ENCODE measurements at regions of chr6 and their contacts with region 1.

Region 1: DNA sequence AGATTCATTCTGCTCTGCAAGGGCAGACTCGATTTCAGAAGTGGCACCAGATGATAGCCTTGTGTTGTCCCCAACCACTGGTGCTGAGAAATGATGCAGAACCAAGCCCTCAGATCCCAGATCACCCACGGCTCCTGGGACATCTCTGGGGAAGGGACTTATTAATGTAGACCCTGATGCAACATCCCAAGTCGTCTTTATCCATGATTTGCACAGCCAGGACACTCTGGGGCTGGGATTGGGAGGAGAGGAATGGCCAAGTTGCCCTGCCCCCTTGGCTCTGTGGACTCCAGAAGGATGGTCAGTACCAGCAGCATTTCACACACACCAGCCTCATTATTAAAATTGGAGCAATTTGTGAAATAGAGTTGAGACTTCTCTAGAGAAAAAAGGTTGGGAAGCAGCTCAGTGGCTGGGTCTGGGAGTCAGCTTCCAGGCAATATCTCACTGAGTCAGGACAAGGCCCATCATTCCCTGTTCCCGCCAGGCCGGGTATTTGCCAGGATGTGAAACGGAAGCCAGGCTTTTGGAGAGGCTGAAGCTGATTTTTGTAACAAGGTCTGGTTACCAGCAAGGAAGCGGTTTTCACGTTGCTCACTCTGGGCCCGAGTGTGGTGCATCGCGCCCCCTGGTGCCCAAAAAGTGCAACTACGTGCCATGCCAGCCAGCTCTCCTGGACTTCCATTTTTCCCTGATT is 67.4 kb downstream of the ZBTB2 start:
- DNase-seq: peak; percentile 36 to 83 (median 74)
- ATAC-seq: peak; percentile 80
- H3K4me3 ChIP-seq: no peak overlapping the region
- H3K4me3 Mint-ChIP-seq: peak overlapping the region; percentile 59
- H3K27ac ChIP-seq: no peak overlapping the region
- H3K27ac Mint-ChIP-seq: no peak overlapping the region
- H3K4me1 ChIP-seq: peaks cover 16% of the 10 kb centered on the region
- H3K4me1 Mint-ChIP-seq: peaks cover 21% of the 10 kb centered on the region
- H3K27me3 ChIP-seq: peaks cover 0 to 15% of the 10 kb centered on the region in 2 experiments
- H3K27me3 Mint-ChIP-seq: peaks cover 36% of the 10 kb centered on the region
- CTCF ChIP-seq: peak; percentile 96

Region 2: DNA sequence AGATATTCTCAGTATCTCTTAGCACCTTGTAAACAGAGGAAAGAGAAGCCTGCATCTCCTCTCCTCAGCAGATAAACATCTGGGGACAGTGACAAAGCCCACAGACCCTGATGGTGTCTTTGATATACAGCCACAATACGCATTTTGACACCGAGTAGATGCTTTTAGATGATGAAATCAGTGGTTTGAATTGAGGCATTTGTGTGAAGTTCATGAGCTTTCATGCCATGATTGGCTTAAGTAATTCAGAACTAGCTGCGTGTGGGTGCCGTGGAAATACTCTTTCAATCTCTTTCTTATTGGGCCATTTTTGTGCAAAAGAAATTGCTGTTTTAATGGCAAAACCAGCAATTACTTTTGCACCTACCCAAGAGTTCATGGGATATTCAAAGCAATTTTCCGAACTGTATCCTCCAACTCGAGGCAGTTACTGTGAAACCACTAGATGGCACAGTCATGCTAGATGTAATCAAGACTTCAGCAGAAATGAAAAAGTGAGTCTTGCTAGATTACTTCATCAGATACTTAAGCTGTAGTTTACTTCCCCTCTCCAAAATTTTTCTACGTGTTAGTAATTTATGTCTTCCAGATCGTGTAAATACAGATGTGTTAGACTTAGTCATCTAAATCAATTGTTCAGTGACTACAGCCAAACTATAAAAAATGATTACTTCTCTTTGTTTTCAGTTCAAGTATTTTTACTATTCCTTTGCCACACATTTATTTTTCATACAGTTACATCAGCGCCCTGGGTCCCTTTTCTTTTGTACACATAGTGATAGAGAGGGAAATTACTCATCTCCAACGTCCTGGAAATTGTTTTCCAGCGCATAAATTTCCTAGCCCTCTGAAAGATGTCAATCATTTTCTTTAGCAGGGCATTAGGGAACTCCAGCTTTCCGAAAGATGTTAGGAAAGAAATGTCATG is 905.8 kb before region 1 on chr6:
- CTCF ChIA-PET with region 1: interaction called, 3 read pairs
- POLR2A ChIA-PET with region 1: no interaction called
- intact Hi-C with region 1: loop called in 1 of 2 experiments (anchors 10 kb)
- DNase-seq: peak in 4 of 9 experiments; percentile 15 to 77 (median 48)
- ATAC-seq: peak; percentile 65
- H3K4me3 ChIP-seq: peak overlapping the region; percentile 34 to 45
- H3K4me3 Mint-ChIP-seq: peak overlapping the region; percentile 79
- H3K27ac ChIP-seq: no peak overlapping the region
- H3K27ac Mint-ChIP-seq: peak overlapping the region; percentile 16
- H3K4me1 ChIP-seq: peaks cover 5% of the 10 kb centered on the region
- H3K4me1 Mint-ChIP-seq: peaks cover 9% of the 10 kb centered on the region
- H3K27me3 ChIP-seq: no peaks in the 10 kb centered on the region
- H3K27me3 Mint-ChIP-seq: peaks cover 29% of the 10 kb centered on the region
- CTCF ChIP-seq: peak; percentile 71

Region 3: GRCh38 chr6:150898399-150899170 is 425.4 kb before region 1 on chr6:
- CTCF ChIA-PET with region 1: interaction called, 242 read pairs
- POLR2A ChIA-PET with region 1: no interaction called
- intact Hi-C with region 1: no loop called
- DNase-seq: no peak
- ATAC-seq: no peak
- H3K4me3 ChIP-seq: no peak overlapping the region
- H3K4me3 Mint-ChIP-seq: no peak overlapping the region
- H3K27ac ChIP-seq: no peak overlapping the region
- H3K27ac Mint-ChIP-seq: no peak overlapping the region
- H3K4me1 ChIP-seq: peaks cover 8% of the 10 kb centered on the region
- H3K4me1 Mint-ChIP-seq: peaks cover 15% of the 10 kb centered on the region
- H3K27me3 ChIP-seq: no peaks in the 10 kb centered on the region
- H3K27me3 Mint-ChIP-seq: no peaks in the 10 kb centered on the region
- CTCF ChIP-seq: no peak

Region 4: DNA sequence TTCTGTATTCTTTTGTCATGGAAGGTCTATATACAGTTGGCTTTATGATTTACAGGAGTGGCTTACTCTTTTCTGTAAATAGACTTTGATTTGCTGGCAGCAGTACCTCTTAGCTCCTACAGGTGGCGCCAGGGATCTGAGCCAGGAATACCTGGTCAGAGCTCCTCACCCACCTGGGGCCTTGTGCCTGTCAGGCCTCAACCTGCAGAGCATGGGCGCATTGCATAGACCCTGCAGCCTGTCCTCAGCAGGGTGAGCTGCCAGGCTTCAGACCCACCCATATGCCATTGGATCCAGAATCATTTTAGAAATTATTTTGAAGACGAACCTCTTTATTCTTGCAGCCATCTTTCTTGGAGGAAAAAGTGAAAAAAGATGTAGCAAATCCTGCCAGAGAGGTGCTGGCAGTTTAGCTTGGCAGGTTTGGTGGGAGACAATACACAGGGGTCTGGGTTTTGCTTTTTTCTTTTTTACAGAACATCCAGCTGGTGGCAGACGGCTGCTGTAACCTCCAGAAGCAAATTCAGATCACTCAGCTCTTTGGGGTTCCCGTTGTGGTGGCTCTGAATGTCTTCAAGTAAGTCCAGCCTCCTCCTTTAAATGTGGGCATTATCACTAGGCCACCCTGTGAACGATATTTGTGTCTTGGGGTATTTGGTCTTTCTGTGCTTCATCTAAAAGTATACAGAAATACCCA is 309.4 kb before region 1 on chr6:
- CTCF ChIA-PET with region 1: interaction called, 108 read pairs
- POLR2A ChIA-PET with region 1: interaction called, 3 read pairs
- intact Hi-C with region 1: loop called in 1 of 2 experiments (anchors 1 kb)
- DNase-seq: peak; percentile 12 to 74 (median 57)
- ATAC-seq: peak; percentile 77
- H3K4me3 ChIP-seq: no peak overlapping the region
- H3K4me3 Mint-ChIP-seq: peak overlapping the region; percentile 27
- H3K27ac ChIP-seq: no peak overlapping the region
- H3K27ac Mint-ChIP-seq: no peak overlapping the region
- H3K4me1 ChIP-seq: no peaks in the 10 kb centered on the region
- H3K4me1 Mint-ChIP-seq: peaks cover 3% of the 10 kb centered on the region
- H3K27me3 ChIP-seq: no peaks in the 10 kb centered on the region
- H3K27me3 Mint-ChIP-seq: no peaks in the 10 kb centered on the region
- CTCF ChIP-seq: peak; percentile 94

Region 5: DNA sequence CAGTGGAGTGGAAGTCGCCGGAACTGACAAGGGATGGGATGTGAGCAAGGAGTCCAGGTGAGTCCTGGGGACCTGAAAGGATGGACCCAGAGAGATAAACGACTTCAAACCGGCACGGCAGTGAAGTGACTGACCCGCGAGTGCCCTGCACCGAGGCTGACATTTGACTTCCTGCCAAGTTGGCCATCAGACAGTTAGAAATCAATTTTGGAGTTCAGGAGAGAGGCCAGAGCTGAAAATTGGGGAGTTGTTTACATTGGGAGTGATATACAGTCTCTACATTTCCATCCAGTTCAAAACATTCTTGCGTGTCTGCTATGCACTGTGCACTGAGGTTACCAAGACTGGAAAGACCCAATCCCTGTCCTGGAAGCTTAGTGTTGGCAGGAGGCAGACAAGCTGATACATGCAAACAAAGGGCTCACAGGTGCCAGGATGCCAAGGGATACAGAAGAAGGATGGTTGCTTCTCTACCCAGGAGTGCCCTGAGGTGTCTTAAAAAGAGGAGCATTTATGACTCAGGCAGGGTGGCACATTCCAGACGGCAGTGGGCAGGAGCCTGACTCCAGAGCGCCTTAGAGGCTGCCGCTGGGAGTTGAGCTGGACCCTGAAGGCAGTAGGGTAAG is 271.8 kb before region 1 on chr6:
- CTCF ChIA-PET with region 1: no interaction called
- POLR2A ChIA-PET with region 1: no interaction called
- intact Hi-C with region 1: no loop called
- DNase-seq: no peak
- ATAC-seq: no peak
- H3K4me3 ChIP-seq: no peak overlapping the region
- H3K4me3 Mint-ChIP-seq: no peak overlapping the region
- H3K27ac ChIP-seq: no peak overlapping the region
- H3K27ac Mint-ChIP-seq: no peak overlapping the region
- H3K4me1 ChIP-seq: no peaks in the 10 kb centered on the region
- H3K4me1 Mint-ChIP-seq: no peaks in the 10 kb centered on the region
- H3K27me3 ChIP-seq: no peaks in the 10 kb centered on the region
- H3K27me3 Mint-ChIP-seq: no peaks in the 10 kb centered on the region
- CTCF ChIP-seq: no peak

Region 6: GRCh38 chr6:151306269-151306783 is 17.6 kb before region 1 on chr6:
- CTCF ChIA-PET with region 1: interaction called, 12 read pairs
- POLR2A ChIA-PET with region 1: no interaction called
- intact Hi-C with region 1: no loop called
- DNase-seq: no peak
- ATAC-seq: no peak
- H3K4me3 ChIP-seq: no peak overlapping the region
- H3K4me3 Mint-ChIP-seq: no peak overlapping the region
- H3K27ac ChIP-seq: no peak overlapping the region
- H3K27ac Mint-ChIP-seq: no peak overlapping the region
- H3K4me1 ChIP-seq: no peaks in the 10 kb centered on the region
- H3K4me1 Mint-ChIP-seq: no peaks in the 10 kb centered on the region
- H3K27me3 ChIP-seq: no peaks in the 10 kb centered on the region
- H3K27me3 Mint-ChIP-seq: peaks cover 11% of the 10 kb centered on the region
- CTCF ChIP-seq: no peak

Region 7: DNA sequence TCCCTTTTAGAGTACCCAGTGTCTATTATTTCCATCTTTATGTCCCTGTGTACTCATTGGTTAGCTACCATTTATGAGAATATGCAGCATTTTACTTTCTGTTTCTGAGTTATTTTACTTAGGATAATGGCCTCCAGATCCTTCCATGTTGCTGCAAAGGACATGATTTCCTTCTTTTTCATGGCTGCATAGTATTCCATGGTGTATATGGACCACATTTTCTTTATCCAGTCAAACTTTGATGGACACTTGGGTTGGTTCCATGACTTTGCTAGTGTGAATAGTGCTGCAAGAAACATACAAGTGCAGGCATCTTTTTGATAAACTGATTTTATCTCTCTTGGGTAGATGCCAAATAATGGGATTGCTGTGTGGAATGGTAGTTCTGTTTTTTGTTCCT is 12.0 kb after region 1 on chr6:
- CTCF ChIA-PET with region 1: interaction called, 63 read pairs
- POLR2A ChIA-PET with region 1: interaction called, 3 read pairs
- intact Hi-C with region 1: no loop called
- DNase-seq: no peak
- ATAC-seq: no peak
- H3K4me3 ChIP-seq: no peak overlapping the region
- H3K4me3 Mint-ChIP-seq: no peak overlapping the region
- H3K27ac ChIP-seq: no peak overlapping the region
- H3K27ac Mint-ChIP-seq: no peak overlapping the region
- H3K4me1 ChIP-seq: no peaks in the 10 kb centered on the region
- H3K4me1 Mint-ChIP-seq: peaks cover 4% of the 10 kb centered on the region
- H3K27me3 ChIP-seq: no peaks in the 10 kb centered on the region
- H3K27me3 Mint-ChIP-seq: peaks cover 2% of the 10 kb centered on the region
- CTCF ChIP-seq: no peak

Region 8: DNA sequence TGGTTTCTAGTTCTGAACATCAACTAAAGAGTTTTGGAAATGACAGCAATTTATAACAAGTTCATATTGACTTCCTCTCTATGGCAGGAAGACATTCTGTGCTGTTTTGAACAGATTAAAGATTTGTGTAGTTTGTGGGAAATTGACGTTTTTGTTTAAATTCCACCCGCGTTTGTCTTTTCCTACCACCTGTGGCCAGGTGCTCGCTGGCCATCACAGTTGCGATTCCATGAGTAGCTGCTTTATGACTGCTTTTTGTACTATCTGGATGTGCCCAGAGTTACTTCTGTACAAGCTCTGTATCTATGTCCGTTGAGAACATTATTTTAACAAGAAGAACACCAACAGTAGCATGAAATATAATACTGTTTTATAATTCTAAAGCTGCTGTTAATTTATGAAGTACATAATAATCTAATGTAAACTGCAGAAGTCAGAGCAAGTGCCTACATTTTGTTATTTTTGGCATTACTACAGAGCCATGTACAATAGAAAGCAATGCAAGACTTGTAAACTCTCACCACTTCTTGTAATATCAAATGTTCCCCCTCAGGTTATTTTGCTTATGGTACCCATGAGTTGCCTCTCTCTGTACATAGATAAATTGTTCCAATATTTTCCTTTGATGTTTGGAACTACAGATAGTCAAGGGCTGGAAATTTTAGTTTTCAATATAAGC is 34.0 kb after region 1 on chr6:
- CTCF ChIA-PET with region 1: interaction called, 10 read pairs
- POLR2A ChIA-PET with region 1: no interaction called
- intact Hi-C with region 1: no loop called
- DNase-seq: no peak
- ATAC-seq: no peak
- H3K4me3 ChIP-seq: no peak overlapping the region
- H3K4me3 Mint-ChIP-seq: no peak overlapping the region
- H3K27ac ChIP-seq: no peak overlapping the region
- H3K27ac Mint-ChIP-seq: peak overlapping the region; percentile 64
- H3K4me1 ChIP-seq: no peaks in the 10 kb centered on the region
- H3K4me1 Mint-ChIP-seq: peaks cover 9% of the 10 kb centered on the region
- H3K27me3 ChIP-seq: no peaks in the 10 kb centered on the region
- H3K27me3 Mint-ChIP-seq: no peaks in the 10 kb centered on the region
- CTCF ChIP-seq: no peak

Measured in CD8-positive, alpha-beta T cell (primary cell).